CD14-positive monocyte (primary cell): ENCODE measurements at regions of chr3 and their contacts with region 1.

Region 1: GRCh38 chr3:100697172-100697571 is 12.1 kb upstream of the TFG start:
- DNase-seq: no peak
- H3K4me3 ChIP-seq: no peak overlapping the region
- H3K4me3 Mint-ChIP-seq: no peak overlapping the region
- H3K27ac ChIP-seq: no peak overlapping the region
- H3K27ac Mint-ChIP-seq: no peak overlapping the region
- H3K4me1 ChIP-seq: no peaks in the 10 kb centered on the region
- H3K4me1 Mint-ChIP-seq: no peaks in the 10 kb centered on the region
- H3K27me3 ChIP-seq: no peaks in the 10 kb centered on the region
- H3K27me3 Mint-ChIP-seq: peaks cover 0 to 7% (median 2%) of the 10 kb centered on the region in 3 donors
- CTCF ChIP-seq: no peak

Region 2: GRCh38 chr3:100725935-100726513 is 28.9 kb after region 1 on chr3:
- intact Hi-C with region 1: loop called in 1 of 2 experiments (anchors 2 kb)
- DNase-seq: no peak
- H3K4me3 ChIP-seq: no peak overlapping the region
- H3K4me3 Mint-ChIP-seq: no peak overlapping the region
- H3K27ac ChIP-seq: peak overlapping the region in 1 of 2 donors; percentile 27
- H3K27ac Mint-ChIP-seq: no peak overlapping the region
- H3K4me1 ChIP-seq: no peaks in the 10 kb centered on the region
- H3K4me1 Mint-ChIP-seq: no peaks in the 10 kb centered on the region
- H3K27me3 ChIP-seq: no peaks in the 10 kb centered on the region
- H3K27me3 Mint-ChIP-seq: no peaks in the 10 kb centered on the region
- CTCF ChIP-seq: no peak